ENCODE measurements at regions of chr2 and their contacts with region 1.

Region 1: GRCh38 chr2:73163483-73164367 is 38.6 kb upstream of the NOTO start:
- DNase-seq: peak; percentile 87

Region 2: GRCh38 chr2:72892506-72893173 is 271.1 kb before region 1 on chr2:
- intact Hi-C with region 1: loop called (anchors 5 to 10 kb)
- DNase-seq: peak; percentile 90

Region 3: DNA sequence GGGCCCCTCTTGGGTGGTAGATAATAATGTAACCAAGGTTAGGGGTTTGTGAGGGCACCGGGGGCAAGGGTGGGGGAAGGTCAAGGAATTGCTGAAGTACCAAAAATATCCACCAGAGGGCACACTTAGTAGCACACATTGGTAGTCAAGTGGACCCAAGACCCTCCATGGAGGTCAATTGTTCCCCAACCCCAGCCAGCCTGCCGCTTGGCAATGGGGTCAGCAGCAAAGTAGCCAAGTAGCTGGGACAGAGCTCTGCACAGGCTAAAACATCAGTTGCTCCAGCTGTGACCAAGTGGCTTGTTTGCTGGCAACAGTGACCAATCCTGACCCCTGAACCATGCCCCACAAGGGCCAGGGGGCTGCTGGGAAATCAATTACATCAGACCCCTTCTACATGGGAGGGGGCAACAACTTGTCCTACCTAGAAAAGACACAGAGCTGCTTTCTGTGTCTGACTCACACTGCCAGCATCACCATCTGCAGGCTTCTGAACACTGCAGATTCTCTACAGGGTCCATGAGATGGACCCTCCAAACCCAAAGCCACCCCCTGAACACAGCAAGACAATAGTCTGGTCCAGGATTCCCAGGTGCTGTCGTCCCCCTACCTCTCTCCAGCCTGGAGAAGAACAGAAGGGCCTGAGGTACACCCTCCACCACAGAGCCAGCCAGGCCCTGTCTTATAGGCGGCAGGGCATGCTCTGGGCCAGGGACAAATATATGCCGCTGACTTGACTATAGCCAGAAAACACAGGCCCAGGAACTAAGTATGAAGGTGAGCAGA is 170.4 kb before region 1 on chr2:
- intact Hi-C with region 1: loop called (anchors 5 kb)
- DNase-seq: peak; percentile 49

Region 4: GRCh38 chr2:73080711-73081131 is 83.0 kb before region 1 on chr2:
- intact Hi-C with region 1: loop called in 1 of 2 experiments (anchors 5 kb)
- DNase-seq: no peak